AG04450 (cell line): ENCODE measurements at regions of chr12 and their contacts with region 1.

Region 1: DNA sequence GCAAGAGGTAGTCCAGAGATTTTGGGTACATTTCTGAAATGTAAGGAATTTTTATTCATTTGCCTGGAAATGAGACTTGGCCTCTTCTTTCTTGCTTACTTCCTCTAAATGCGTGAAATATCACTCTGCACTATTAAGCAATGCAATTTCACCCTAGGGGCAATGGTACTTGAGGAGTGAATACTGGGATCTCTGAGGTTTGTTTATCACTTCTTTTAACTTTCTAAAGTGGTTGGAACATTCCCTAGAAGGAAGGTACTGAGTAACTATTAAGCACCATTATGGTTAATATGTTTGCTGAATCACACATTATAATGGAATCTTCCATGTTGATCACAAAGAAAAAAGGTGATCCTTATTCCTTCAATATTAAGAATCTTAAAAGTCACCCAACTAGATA is 120.9 kb upstream of the CAND1 start:
- DNase-seq: no peak
- H3K4me3 ChIP-seq: no peak overlapping the region
- H3K27ac ChIP-seq: no peak overlapping the region
- H3K27me3 ChIP-seq: no peaks in the 10 kb centered on the region
- CTCF ChIP-seq: no peak

Region 2: GRCh38 chr12:67161322-67161918 is 13.2 kb after region 1 on chr12:
- CTCF ChIA-PET with region 1: interaction called, 15 read pairs
- POLR2A ChIA-PET with region 1: no interaction called
- DNase-seq: no peak
- H3K4me3 ChIP-seq: no peak overlapping the region
- H3K27ac ChIP-seq: no peak overlapping the region
- H3K27me3 ChIP-seq: no peaks in the 10 kb centered on the region
- CTCF ChIP-seq: peak; percentile 60

Region 3: DNA sequence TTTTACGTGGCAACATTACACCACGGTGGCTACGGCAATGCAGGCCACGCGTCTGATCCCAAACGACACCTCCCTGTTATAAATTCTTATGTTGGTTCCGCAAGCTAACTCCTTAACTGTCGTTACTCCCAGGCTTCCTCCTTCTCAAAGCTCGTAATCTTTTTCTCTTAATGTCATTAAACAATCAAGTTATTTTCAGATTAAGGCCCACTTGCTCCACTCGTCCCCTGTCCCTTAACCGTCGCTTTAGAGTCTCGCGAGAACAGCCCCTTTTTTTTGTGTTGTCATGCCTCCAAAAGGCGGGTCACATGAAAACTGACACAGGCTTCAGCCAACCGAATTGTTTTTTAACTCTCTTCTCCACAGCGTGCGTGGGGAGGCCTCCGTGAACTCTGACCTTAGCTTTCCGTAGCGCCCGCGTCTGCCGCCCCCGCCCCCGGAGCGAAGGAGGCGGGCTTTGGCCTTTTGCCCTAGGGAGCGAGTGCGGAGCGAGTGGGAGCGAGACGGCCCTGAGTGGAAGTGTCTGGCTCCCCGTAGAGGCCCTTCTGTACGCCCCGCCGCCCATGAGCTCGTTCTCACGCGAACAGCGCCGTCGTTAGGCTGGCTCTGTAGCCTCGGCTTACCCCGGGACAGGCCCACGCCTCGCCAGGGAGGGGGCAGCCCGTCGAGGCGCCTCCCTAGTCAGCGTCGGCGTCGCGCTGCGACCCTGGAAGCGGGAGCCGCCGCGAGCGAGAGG is 120.8 kb after region 1 on chr12 and contains the start of gene CAND1:
- CTCF ChIA-PET with region 1: no interaction called
- POLR2A ChIA-PET with region 1: no interaction called
- DNase-seq: peak; percentile 98
- H3K4me3 ChIP-seq: peak within 1 kb of the TSS; percentile 92
- H3K27ac ChIP-seq: peak within 1 kb of the TSS; percentile 97
- H3K27me3 ChIP-seq: no peaks in the 10 kb centered on the region
- CTCF ChIP-seq: no peak
- polyA plus RNA-seq, gene CAND1: 99.7 and 134 TPM in 2 replicates

Region 4: DNA sequence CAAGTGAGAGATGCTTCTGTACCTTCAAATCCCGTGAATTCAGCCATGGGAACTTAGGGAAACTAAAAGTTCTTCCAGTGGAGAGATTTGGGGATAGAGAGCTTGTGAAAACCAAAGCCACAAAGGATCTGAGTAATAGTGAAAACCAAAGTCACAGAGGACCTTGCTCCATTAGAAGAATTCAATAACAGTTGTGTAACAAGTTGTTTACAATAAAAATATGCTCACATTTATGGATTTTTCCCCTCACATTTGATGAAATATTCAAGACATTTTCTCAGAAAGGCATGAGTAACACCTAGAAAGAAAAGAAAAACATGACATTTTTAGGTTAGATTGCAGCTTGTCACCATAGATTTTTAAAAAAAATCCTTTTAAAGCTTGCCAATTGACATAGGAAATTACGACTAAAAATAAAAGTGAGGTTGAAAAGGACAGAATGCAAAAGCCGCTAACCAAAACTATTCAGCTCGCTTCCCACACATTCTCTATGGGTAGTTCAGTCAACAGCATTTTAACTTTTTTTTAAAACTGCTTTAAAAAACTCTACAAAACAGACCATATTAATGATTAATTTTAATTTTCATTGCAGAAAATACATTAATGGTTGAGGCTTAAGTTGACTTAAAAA is 234.1 kb after region 1 on chr12:
- CTCF ChIA-PET with region 1: no interaction called
- POLR2A ChIA-PET with region 1: no interaction called
- DNase-seq: no peak
- H3K4me3 ChIP-seq: no peak overlapping the region
- H3K27ac ChIP-seq: no peak overlapping the region
- H3K27me3 ChIP-seq: peaks cover 4% of the 10 kb centered on the region
- CTCF ChIP-seq: no peak